Common myeloid progenitor, CD34-positive (primary cell): ENCODE measurements at regions of chr1 and their contacts with region 1.

Region 1: GRCh38 chr1:220748089-220748934 is at the start of gene MTARC2:
- DNase-seq: peak in 2 of 3 donors; percentile 15 to 41
- H3K4me3 ChIP-seq: peak within 1 kb of the TSS; percentile 29 to 84 (median 69)
- H3K27ac ChIP-seq: no peak within 1 kb of the TSS
- H3K4me1 ChIP-seq: peaks cover 2 to 15% (median 12%) of the 10 kb centered on the region in 4 experiments
- H3K27me3 ChIP-seq: peaks cover 12 to 43% (median 14%) of the 10 kb centered on the region in 5 experiments

Region 2: GRCh38 chr1:220733090-220733601 is 15.2 kb before region 1 on chr1:
- CTCF ChIA-PET with region 1: interaction called, 12 read pairs
- POLR2A ChIA-PET with region 1: no interaction called
- DNase-seq: peak; percentile 87 to 88 (median 88)
- H3K4me3 ChIP-seq: peak overlapping the region in 3 of 7 experiments; percentile 6 to 65 (median 35)
- H3K27ac ChIP-seq: no peak overlapping the region
- H3K4me1 ChIP-seq: peaks cover 0 to 10% (median 7%) of the 10 kb centered on the region in 4 experiments
- H3K27me3 ChIP-seq: no peaks in the 10 kb centered on the region